ENCODE measurements at regions of chr2 and their contacts with region 1.

Region 1: DNA sequence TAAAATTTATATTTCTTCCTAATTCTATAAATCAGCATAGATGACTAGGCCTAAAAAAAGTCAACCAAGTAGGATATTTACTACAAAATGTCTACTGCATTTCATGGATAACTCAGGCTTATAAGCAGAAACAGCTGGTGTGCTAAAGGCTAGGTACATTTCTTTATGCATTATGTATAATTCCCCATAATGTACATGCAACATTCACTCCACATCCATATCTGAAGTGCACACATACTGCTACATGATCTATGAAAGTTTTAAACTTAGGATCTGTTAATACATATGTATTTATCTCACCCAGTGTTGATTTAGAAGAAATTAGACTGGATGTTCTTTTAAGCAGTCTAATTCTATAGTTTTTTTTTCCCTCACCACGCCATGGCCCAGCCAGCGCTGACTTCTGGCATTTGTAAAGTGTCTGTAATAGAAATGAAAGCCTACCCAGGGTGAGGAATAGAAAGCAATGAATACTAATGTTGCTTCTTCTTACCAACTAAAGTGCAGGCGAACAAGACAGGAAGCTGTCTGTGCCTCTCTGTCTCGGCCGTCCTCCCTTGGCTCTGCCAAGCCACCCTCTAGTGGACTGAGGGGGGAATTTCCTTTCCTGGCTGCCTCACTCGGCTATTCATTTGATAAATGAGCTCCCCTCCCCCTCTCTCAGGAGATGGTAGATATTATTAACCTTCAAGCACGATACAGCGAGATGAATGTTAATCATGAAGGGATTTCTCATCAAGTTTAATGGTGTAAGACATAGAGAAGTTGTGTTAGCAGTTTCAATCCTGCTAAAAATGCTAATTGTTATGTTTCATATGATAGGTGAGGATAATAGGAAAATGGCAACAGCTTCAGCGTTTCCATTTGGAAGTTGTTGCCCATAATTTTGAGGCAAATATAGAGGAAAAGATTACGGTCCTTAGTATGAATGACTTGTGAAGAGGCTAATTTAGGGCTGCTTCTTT is 384.5 kb downstream of the MTX2 start:
- DNase-seq: peak; percentile 61
- ATAC-seq: peak; percentile 93

Region 2: DNA sequence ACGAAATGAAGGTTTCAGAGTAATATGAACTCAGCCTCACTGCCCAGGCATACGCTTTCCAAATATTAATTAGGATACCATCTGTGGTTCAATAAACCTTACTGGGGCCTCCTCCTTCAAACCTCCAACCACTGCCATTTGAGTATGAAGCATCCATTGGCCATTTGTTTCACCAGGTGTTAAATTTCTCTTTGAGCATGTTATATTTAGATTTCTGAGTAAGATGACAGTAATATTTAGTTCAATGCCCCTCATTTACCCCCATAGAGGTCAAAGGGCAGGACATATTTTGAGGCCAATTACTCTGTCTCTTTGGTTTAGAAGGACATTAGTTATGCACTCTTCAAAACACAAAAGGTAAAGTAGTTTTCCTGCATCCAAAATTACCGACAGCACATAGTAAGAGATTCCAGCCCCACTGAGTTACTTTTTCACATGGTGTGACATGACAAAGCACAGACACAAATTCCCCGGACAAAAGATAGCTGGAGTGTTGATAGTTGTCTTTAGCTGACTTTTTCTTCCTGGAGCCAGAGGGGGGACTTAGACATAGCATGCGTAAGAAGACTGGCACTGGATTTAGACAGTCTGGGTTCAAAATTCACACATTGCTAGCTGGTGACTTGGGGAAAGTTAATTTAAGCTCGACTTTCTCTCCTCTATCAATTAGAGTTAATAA is 618.6 kb before region 1 on chr2:
- intact Hi-C with region 1: no loop called
- DNase-seq: no peak
- ATAC-seq: peak; percentile 93

Region 3: GRCh38 chr2:176473177-176473576 is 180.6 kb before region 1 on chr2:
- intact Hi-C with region 1: no loop called
- DNase-seq: peak; percentile 47
- ATAC-seq: peak; percentile 81

Region 4: DNA sequence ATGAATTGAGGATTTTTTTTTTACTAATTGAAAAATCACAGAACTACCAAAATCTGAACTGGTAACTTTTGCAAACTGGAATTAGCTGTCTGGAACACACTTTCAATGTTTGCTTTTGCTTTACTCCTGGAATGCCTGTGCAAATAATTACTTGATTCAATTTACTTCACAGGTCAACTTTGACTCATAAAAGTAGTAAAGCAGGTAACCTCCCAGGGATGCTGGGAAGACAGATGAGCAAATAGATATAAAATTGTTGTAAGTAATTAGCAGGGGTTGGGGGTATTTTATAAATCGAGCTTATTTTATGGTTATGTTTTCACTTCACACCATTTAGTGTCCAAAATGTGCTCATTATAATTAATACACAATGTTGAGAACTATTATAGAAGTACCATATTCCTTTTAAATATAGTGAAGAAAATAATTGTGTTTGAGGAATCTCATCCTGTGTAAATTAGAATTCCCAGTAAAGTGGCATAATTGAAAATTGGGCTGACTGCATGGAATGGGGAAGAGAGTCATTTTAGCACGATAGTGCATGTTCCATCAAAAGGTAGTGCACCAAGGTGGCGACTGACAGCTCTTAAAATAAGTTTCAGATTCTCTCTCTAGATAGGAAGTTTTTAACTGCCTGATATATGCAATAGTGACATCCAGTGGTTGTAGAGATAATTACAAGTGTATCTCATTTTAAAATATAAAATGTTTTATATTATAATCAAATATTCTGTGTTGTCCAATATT is 160.7 kb after region 1 on chr2:
- intact Hi-C with region 1: loop called (anchors 5 kb)
- DNase-seq: no peak
- ATAC-seq: no peak

Region 5: DNA sequence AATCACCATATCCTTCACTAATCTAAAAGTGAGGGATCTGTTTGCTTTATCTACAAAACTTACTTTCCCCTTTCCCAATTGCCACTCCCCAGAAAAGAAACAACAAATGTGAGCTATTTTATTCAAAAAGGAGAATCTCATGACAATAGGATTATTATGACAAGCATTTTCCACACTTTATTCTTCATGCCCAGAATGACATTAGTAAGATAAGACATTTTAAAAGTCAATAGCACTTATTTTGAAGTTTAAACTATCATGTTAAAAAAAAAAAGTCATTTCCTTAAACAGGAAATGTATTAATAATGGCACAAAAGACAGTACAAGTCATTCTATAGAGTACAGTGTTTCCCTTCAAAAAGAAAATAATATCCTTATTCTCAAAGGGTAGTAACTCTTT is 500.0 kb after region 1 on chr2:
- intact Hi-C with region 1: loop called (anchors 5 kb)
- DNase-seq: no peak
- ATAC-seq: no peak